Right cardiac atrium (tissue), 5 donors: ENCODE measurements at regions of chr1 and their contacts with region 1.

Region 1: GRCh38 chr1:94025383-94026340 is 95.3 kb downstream of the ABCA4 start:
- DNase-seq: no peak
- ATAC-seq: peak in 1 of 2 donors; percentile 41
- H3K4me3 ChIP-seq: no peak overlapping the region
- H3K27ac ChIP-seq: no peak overlapping the region
- H3K4me1 ChIP-seq: peaks cover 5% of the 10 kb centered on the region
- H3K27me3 ChIP-seq: no peaks in the 10 kb centered on the region

Region 2: DNA sequence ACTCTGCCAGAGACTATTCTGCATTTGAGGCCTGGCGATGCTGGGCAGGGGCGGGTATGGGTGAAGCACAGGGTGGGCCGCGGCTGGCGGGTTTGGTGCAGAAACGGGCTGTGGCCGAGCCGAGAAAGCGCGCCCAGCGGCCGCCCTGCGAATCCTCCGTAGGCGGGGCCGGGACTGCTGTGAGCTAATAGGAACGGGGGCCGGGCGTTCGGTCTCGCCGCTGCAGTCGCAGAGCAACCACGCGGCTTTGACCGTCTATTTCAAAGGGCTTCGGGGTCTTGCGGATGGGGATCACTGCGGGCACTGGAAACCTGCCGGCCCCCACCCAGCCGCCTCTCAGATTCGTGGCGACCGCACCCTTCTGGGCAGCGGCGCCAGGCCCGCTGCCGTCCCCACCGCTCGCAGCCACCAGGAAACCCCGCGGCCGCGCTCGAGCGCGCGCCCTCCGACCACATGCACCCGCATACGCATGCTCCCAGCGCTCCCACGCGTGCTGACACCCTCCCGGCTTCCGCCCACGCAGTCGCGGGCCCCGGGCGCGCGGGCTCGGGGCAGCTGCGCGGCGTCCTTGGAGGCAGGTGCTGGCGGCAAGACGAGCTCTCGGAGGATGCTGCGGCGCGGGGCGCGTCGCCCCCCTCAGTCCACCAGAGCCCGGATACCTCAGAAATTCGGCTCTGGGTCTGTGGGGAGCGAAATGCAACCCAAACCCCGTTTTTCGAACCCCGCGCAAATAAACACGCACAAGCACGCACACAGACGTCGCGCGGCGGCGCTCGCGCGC is 179.3 kb before region 1 on chr1:
- intact Hi-C with region 1: no loop called
- DNase-seq: peak; percentile 90 to 97 (median 95)
- ATAC-seq: peak; percentile 76 to 82
- H3K4me3 ChIP-seq: peak overlapping the region; percentile 68
- H3K27ac ChIP-seq: peak overlapping the region; percentile 98
- H3K4me1 ChIP-seq: peaks cover 3% of the 10 kb centered on the region
- H3K27me3 ChIP-seq: no peaks in the 10 kb centered on the region

Region 3: GRCh38 chr1:93967306-93967705 is 58.4 kb before region 1 on chr1:
- intact Hi-C with region 1: no loop called
- DNase-seq: no peak
- ATAC-seq: no peak
- H3K4me3 ChIP-seq: no peak overlapping the region
- H3K27ac ChIP-seq: no peak overlapping the region
- H3K4me1 ChIP-seq: no peaks in the 10 kb centered on the region
- H3K27me3 ChIP-seq: no peaks in the 10 kb centered on the region

Region 4: DNA sequence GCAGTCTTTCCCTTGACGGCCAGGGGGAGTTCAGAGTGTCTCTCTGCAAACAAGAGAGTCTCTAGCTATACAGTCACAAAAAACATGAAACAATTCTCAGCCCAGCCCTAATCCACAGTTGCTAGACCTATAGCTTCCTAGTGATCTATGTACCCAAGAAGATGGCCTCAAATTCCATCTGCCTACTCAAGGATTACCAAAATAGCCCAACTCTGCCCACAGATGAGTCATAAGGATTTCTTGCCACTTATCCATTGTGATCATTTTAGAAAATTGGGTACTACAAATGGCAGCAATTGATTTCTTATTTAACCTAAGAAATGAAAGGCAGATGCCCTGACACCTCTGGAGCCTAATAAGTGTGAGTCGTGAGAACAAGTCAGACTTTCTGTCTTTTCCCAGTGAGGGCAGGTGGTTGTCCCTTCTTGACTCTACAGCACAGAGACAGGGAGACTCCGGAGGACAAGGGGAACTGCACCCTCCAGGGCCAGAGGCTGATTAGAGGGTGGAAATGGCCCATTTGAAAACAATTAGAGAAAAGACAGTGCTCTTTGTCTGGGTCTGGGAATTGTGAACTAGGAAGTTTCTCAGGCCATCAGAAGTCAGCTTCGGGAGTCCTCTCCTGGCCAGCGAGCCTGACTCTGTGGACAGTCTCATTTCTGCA is 29.9 kb after region 1 on chr1:
- intact Hi-C with region 1: no loop called
- DNase-seq: no peak
- ATAC-seq: no peak
- H3K4me3 ChIP-seq: no peak overlapping the region
- H3K27ac ChIP-seq: no peak overlapping the region
- H3K4me1 ChIP-seq: peaks cover 3% of the 10 kb centered on the region
- H3K27me3 ChIP-seq: no peaks in the 10 kb centered on the region

Region 5: DNA sequence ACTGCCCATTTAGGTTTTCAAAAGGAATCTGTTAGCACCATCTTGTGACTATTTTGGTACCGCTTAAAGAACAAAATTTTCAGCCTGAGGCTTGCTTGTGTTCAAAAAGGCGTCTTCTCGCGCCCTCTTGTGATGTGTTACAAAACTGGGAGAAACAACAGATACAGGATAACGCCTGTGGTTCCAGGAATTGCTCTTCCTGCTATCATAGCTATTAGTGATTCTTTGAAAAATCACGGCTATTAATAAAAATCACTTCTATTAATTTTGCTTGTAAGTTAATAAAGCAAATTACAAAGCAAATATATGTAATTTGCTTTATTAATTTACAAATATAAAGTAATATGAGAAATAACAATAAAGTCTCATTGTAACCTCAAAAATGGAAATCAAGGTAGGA is 310.3 kb after region 1 on chr1:
- intact Hi-C with region 1: loop called in 3 of 4 experiments (anchors 2 to 10 kb)
- DNase-seq: peak; percentile 65 to 70 (median 69)
- ATAC-seq: peak; percentile 86 to 88
- H3K4me3 ChIP-seq: no peak overlapping the region
- H3K27ac ChIP-seq: no peak overlapping the region
- H3K4me1 ChIP-seq: no peaks in the 10 kb centered on the region
- H3K27me3 ChIP-seq: no peaks in the 10 kb centered on the region